Adrenal gland (tissue), 19 donors: ENCODE measurements at regions of chr7 and their contacts with region 1.

Region 1: DNA sequence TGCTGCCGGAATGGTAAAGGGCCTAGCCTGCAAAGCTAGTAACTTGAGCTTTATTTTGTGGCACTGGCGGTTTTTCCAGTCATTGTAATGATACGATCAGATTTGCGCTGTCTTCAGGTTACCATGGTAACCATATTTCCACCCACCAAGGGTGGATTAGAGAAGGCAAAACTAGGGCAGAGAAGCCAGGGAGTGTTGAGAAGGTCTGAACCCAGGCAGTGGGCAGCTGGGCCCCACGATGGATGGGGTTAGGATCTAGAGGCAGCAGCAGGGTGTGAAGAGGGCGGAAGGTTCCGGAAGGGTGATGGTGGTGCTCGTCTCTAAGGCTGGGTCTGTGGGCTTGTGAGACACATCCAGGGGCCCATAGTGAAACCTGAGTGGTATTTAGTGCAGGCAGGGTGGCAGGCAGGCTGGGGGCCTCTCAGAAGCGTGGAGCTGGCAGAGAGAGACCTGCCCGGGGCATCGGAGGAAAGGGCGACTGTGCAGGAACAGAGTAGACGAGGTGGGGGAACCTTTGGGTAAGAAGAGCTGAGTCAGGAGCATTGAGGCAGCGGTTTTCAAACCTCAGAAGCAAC is 87.9 kb upstream of the GTF2I start:
- DNase-seq: no peak
- H3K4me3 ChIP-seq: no peak overlapping the region
- H3K27ac ChIP-seq: peak overlapping the region in 1 of 5 donors; percentile 54
- H3K4me1 ChIP-seq: peaks cover 0 to 15% of the 10 kb centered on the region in 2 donors
- H3K27me3 ChIP-seq: no peaks in the 10 kb centered on the region
- CTCF ChIP-seq: no peak
- POLR2A ChIP-seq: no peak

Region 2: GRCh38 chr7:74262639-74263398 is 306.8 kb before region 1 on chr7:
- intact Hi-C with region 1: no loop called
- DNase-seq: no peak
- H3K4me3 ChIP-seq: no peak overlapping the region
- H3K27ac ChIP-seq: no peak overlapping the region
- H3K4me1 ChIP-seq: peaks cover 0 to 5% of the 10 kb centered on the region in 2 donors
- H3K27me3 ChIP-seq: no peaks in the 10 kb centered on the region
- CTCF ChIP-seq: no peak
- POLR2A ChIP-seq: no peak

Region 3: GRCh38 chr7:74417419-74417971 is 152.1 kb before region 1 on chr7:
- intact Hi-C with region 1: loop called in 1 of 2 experiments (anchors 2 kb)
- DNase-seq: peak; percentile 65 to 85 (median 74)
- H3K4me3 ChIP-seq: no peak overlapping the region
- H3K27ac ChIP-seq: no peak overlapping the region
- H3K4me1 ChIP-seq: peaks cover 3 to 4% of the 10 kb centered on the region in 2 donors
- H3K27me3 ChIP-seq: no peaks in the 10 kb centered on the region
- CTCF ChIP-seq: peak; percentile 94 to 99 (median 97)
- POLR2A ChIP-seq: no peak

Region 4: DNA sequence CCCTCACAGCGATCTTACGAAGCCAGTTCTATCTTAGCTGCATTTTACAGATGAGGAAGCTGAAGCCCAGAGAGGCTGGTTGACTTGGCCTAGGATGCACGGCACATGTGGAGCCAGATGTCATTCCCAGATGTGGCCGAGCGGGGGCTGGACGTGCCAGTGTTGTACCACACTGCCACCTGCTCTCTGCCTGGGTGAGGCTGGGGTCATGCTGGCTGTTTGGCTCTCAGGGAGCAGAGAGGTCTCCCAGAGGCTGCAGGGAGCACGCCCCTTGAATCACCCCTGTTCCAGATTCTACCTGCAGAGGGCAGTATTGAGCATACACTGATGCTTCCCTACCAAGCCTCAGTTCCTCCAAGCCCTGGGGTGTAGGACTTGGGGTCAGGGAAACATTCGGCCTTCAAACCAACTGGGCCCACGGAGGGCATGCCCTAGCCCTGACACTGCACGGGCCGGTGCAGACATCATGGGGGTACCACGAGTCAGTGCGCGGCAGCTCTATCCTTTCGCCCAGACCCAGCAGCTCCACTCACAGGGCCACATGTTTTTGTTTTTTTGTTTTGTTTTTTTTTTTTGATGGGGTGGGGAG is 119.7 kb before region 1 on chr7:
- intact Hi-C with region 1: loop called in 1 of 2 experiments (anchors 10 kb)
- DNase-seq: peak; percentile 48 to 83 (median 66)
- H3K4me3 ChIP-seq: no peak overlapping the region
- H3K27ac ChIP-seq: no peak overlapping the region
- H3K4me1 ChIP-seq: peaks cover 11 to 12% of the 10 kb centered on the region in 2 donors
- H3K27me3 ChIP-seq: no peaks in the 10 kb centered on the region
- CTCF ChIP-seq: peak; percentile 69 to 81 (median 74)
- POLR2A ChIP-seq: no peak

Region 5: DNA sequence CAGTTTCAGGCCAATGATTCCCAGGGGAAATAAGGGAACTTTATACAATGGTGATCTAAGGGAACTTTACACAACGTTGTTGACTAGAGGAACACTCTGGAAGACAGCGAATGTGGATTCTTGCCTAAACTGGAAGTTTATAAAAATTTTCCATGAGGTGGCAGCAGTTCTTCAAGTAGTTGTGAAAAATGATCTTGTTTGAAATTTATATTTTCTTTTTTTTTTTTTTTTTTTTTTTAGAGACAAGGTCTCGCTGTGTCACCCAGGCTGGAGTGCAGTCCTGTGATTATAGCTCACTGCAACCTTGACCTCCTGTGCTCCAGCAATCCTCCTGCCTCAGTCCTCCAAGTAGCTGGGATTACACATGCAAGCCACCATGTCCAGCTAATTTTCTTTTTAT is 55.9 kb after region 1 on chr7:
- intact Hi-C with region 1: no loop called
- DNase-seq: peak; percentile 60 to 87 (median 85)
- H3K4me3 ChIP-seq: no peak overlapping the region
- H3K27ac ChIP-seq: peak overlapping the region in 3 of 5 donors; percentile 48 to 85 (median 83)
- H3K4me1 ChIP-seq: peaks cover 23 to 27% of the 10 kb centered on the region in 2 donors
- H3K27me3 ChIP-seq: no peaks in the 10 kb centered on the region
- CTCF ChIP-seq: peak in 5 of 6 experiments; percentile 18 to 50 (median 20)
- POLR2A ChIP-seq: peak in 1 of 2 donors; percentile 47

Region 6: GRCh38 chr7:74718336-74718735 is 148.7 kb after region 1 on chr7:
- intact Hi-C with region 1: no loop called
- DNase-seq: no peak
- H3K4me3 ChIP-seq: no peak overlapping the region
- H3K27ac ChIP-seq: no peak overlapping the region
- H3K4me1 ChIP-seq: no peaks in the 10 kb centered on the region
- H3K27me3 ChIP-seq: no peaks in the 10 kb centered on the region
- CTCF ChIP-seq: no peak
- POLR2A ChIP-seq: no peak